Right cardiac atrium (tissue), 5 donors: ENCODE measurements at regions of chr9 and their contacts with region 1.

Region 1: DNA sequence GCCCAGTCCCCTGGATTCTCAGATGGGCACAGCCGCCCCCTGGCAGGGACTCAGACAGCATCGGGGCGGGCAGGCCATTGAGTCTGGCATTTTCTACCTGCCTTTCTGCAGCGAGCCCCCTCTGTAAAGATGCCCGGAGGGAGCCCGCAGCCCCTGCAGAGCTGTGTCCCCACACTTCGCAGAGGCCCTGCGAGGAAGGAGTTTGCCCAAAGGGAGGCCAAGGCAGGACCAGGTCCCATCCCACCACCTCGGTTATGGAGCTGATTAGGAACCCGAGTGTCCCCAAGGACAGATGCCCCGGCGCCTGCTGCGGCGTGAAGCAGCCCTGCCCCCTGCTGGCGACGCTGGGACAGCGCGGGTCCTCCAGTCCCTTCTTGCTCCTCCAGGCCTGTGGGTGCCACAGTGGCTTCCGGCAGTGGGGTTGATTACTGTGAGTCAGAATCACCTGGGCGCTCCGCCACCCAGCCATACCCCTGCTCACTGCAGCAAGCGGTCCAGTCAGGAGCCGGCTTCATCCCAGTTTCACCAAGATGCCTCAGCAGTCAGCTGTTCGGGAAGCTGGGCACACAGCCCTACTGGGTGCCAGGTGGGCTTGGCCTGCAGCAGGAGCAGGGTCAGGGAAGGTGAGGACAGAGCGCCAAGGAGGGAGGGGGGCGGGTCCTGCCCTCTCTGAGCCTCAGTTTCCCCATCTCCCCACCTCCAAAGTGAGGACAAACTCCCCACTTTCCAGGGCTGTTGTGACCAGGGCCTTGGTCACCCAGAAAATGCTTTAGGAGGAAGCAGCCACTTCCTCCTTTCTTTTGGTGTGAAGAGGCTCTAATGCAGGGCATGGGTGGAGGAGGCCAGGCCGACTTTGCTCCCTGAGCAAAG is 117.1 kb downstream of the RXRA start:
- DNase-seq: peak; percentile 84 to 93 (median 93)
- ATAC-seq: peak; percentile 78 to 85
- H3K4me3 ChIP-seq: no peak overlapping the region
- H3K27ac ChIP-seq: no peak overlapping the region
- H3K4me1 ChIP-seq: peaks cover 13% of the 10 kb centered on the region
- H3K27me3 ChIP-seq: no peaks in the 10 kb centered on the region

Region 2: DNA sequence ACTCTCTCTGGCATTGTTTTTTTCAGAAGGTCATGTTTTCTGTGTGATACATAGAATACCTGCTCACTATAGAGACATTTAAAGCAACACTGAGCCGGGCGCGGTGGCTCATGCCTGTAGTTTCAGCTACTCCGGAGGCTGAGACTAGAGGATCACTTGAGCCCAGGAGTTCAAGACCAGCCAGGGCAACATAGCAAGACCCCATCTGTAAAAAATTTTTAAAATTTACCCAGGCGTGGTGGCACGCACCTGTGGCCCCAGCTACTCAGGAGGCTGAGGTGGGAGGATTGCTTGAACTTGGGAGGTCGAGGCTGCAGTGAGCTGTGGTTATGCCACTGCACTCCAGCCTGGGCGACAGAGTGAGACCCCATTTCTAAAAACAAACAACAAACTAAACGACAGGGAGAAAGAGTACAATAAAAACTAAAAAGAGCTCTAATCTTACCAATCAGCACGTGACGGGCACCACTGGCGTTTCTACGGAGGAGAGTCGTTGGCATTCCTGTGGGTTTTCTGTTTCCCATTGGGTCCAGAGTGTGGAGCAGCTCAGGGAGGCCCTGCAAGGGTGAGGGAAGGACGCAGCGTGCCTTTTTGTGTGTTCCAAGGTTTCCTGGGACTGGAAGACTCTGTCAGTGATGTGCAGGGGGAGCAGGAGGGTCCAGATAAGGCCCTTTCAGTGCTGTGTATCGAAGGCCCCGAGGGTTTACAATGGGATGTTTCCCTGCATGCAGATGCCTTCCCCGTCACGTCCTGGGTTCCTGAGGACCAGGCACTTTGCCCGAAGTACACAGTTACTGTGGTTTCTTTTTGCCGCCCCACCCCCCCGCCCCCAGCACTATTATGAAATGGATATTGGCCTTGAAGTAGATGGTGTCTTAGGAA is 271.8 kb before region 1 on chr9:
- intact Hi-C with region 1: loop called (anchors 1 to 2 kb)
- DNase-seq: peak in 2 of 3 donors; percentile 80 to 84
- ATAC-seq: peak; percentile 4 to 21
- H3K4me3 ChIP-seq: no peak overlapping the region
- H3K27ac ChIP-seq: peak overlapping the region; percentile 57
- H3K4me1 ChIP-seq: no peaks in the 10 kb centered on the region
- H3K27me3 ChIP-seq: no peaks in the 10 kb centered on the region